Activated T-helper 2 cell treated with anti-CD3 and anti-CD28 coated beads, Interferon-gamma antibody, Interleukin-2, Interleukin-4, amounts not matched to agents 10 μg/mL and 5 μg/mL and 100 μg/mL, durations not matched to agents 14 hours and 24 hours and 36 hours (primary cell): ENCODE measurements at regions of chr15 and their contacts with region 1.

Region 1: DNA sequence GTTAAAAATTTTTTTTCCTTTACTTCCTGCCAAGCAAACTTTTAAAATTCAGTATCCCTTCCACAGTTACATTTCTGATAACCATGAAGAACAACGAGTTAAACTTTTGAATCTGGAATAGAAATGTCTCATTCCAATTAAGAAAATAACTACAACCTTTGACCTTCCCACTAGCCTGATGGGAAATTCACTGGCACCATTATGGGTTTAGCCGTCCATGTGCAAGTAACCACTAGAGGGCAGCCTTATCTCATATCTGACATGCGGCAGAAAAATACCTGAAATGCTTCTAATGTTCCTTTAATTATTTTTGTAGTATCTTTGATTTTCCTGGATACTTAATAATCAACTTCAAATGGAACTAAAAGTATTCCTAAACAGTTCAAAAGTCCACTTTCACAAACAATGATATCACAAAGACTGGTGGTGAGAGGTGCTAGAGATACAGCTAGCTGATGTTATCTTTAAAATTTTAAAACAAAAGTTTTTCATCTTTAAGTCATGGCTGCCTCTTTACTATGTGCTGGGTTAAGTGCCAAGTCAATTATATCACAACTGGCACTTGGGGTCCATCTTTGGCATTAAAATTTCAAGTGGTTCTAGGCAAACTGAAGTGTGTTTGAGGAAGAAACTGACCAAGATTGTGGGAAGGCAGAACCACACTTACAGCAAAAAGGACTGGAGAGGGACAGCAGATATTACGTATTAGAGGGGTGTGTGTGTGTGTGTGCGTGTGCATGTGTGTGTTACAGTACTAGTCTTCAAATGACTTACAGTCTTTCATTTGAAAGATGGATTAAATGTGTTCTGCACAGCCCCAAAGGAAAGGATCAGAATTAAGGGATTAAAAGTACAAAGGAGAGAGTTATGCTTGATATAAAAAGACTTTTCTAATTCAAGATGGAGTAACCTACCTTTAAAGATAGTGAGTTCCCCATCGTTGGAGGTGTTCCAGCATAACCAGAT is 107.1 kb upstream of the ICE2 start:
- DNase-seq: peak; percentile 42
- H3K4me3 Mint-ChIP-seq: peak overlapping the region; percentile 68
- H3K27ac Mint-ChIP-seq: peak overlapping the region; percentile 82
- H3K4me1 Mint-ChIP-seq: peaks cover 80% of the 10 kb centered on the region
- H3K27me3 Mint-ChIP-seq: peaks cover 14% of the 10 kb centered on the region

Region 2: DNA sequence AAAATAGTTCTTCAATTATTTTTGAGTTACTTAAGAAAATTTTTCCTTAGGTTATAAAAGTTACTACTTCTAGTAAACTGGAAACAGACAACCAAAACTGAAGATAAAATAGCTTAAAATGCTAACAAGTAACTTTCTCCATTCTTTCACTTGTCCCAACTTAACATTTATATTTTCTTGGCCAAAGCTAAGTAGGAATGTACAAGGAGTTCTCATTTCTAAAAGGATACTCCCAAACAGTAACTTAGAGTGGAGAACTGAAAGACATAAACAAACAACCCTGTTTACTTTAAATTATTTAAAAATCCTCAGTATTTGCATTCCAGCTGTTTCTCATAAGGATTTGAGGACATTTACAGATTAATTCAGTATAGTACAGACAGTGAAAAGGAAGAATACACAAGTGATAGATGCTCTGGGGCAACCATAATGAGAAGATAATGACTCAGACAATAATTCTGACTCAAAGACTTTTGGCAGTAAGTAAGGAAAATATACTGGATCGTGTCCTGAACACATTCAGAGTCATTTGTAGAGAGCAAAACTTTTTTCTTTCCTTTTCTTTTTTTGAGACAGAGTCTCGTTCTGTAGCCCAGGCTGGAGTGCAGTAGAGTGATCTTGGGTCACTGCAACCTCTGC is 159.0 kb before region 1 on chr15:
- intact Hi-C with region 1: no loop called
- DNase-seq: no peak
- H3K4me3 Mint-ChIP-seq: no peak overlapping the region
- H3K27ac Mint-ChIP-seq: no peak overlapping the region
- H3K4me1 Mint-ChIP-seq: peaks cover 8% of the 10 kb centered on the region
- H3K27me3 Mint-ChIP-seq: no peaks in the 10 kb centered on the region

Region 3: DNA sequence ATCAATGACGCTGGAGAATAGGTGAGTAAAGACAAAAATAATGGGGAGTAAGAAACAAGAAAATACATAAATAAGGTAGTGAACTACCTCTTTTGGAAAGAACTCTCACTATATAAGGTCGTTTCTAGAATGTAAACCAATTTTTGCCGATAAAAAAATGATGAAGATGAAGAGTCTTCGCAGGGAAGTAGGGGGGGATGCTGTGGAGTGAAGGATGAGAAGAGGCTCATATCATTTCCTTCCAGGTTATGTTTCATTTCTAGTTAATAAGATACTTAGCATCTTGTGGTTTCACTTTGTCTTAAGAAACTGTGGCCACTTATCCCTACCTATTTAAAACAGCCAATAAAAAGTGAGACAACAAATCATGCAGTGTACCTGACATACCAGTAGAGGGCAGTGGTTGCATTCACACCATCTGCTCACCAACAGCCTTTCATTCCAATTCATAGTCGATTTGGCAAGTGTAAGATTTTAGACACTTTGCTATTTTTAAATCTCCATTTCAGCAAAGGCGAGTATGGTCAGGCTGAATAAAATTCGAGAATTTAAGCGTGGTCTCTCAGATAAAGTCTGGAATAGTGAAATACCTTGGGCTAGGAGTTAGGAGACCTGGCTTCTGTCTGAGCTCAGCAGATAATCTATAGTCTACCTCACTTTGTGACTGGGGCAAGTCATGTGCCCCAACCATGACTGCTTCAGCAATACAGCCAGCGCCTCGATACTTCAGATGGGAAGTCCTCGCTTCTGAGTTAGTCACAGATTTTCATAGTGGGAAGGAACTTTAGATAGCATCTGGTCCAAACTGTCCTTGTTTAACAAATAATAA is 78.2 kb before region 1 on chr15:
- intact Hi-C with region 1: loop called (anchors 2 kb)
- DNase-seq: peak; percentile 43
- H3K4me3 Mint-ChIP-seq: no peak overlapping the region
- H3K27ac Mint-ChIP-seq: peak overlapping the region; percentile 11
- H3K4me1 Mint-ChIP-seq: peaks cover 29% of the 10 kb centered on the region
- H3K27me3 Mint-ChIP-seq: no peaks in the 10 kb centered on the region

Region 4: GRCh38 chr15:60573936-60574335 is 12.1 kb before region 1 on chr15:
- intact Hi-C with region 1: loop called (anchors 1 kb)
- DNase-seq: no peak
- H3K4me3 Mint-ChIP-seq: peak overlapping the region; percentile 61
- H3K27ac Mint-ChIP-seq: peak overlapping the region; percentile 85
- H3K4me1 Mint-ChIP-seq: peaks cover 59% of the 10 kb centered on the region
- H3K27me3 Mint-ChIP-seq: no peaks in the 10 kb centered on the region

Region 5: DNA sequence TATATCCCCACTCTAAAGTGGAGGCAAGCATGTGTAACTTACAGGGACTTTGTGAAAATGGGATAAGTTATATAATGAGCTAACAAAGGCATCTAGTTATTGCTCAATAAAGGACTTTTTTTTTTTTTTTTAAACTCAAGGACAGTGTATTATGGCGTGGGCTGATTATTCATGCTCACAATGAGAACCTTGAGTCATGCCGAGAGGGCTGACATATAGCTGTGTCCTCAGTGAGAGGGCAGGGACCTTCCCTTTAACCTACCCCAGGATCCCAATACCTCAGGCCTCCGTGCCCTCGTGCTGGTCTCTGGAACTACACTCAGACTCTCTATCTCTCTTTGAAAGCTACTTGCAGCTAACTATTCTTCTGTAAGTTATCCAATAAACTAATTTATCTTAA is 212.8 kb after region 1 on chr15:
- intact Hi-C with region 1: loop called (anchors 5 kb)
- DNase-seq: no peak
- H3K4me3 Mint-ChIP-seq: no peak overlapping the region
- H3K27ac Mint-ChIP-seq: no peak overlapping the region
- H3K4me1 Mint-ChIP-seq: peaks cover 39% of the 10 kb centered on the region
- H3K27me3 Mint-ChIP-seq: peaks cover 9% of the 10 kb centered on the region

Region 6: DNA sequence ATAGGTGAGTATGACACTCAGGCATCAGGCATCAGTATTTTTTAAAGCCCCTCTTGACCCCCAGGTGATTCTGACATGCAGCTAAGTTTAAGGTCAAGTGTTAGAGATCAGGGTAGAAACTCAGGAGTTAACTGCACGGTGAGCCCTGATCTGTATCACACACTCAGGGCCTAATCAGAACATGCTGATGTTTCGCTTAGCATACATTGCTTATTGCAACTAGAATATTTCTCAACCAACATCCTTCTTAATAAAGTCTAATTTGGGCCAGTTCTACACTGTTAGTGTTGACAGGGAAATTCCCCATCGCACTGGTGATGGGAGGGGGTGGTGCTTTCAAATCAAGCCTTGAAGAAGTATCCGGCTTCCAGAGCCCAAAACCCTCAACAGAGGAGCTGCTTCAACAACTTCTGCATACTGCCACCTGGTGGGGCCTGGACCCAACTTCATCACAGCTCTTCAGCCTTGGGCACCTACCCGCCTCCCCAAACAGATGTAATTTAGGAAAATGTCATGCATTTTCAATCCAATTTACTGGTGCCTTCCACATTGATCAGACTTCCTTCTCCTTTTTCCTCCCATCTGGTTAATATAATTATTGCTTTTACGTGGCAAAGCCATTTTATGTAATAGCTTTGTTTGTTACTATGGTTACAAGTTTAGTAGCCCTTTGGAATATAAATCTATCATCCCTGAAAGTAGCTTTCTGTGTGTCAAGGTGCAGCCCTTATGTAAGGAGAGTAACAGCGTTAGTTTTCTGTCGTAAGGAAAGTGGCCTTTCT is 330.8 kb after region 1 on chr15:
- intact Hi-C with region 1: loop called (anchors 1 kb)
- DNase-seq: peak; percentile 69
- H3K4me3 Mint-ChIP-seq: no peak overlapping the region
- H3K27ac Mint-ChIP-seq: no peak overlapping the region
- H3K4me1 Mint-ChIP-seq: peaks cover 16% of the 10 kb centered on the region
- H3K27me3 Mint-ChIP-seq: peaks cover 27% of the 10 kb centered on the region